Sigmoid colon (tissue), 7 donors: ENCODE measurements at regions of chr2 and their contacts with region 1.

Region 1: GRCh38 chr2:37982147-37982582 is 57.1 kb downstream of the RMDN2 start:
- DNase-seq: peak; percentile 78
- H3K4me3 ChIP-seq: peak overlapping the region in 3 of 4 donors; percentile 20 to 23 (median 22)
- H3K27ac ChIP-seq: no peak overlapping the region
- H3K4me1 ChIP-seq: peaks cover 0 to 5% (median 2%) of the 10 kb centered on the region in 4 donors
- H3K27me3 ChIP-seq: no peaks in the 10 kb centered on the region
- CTCF ChIP-seq: peak; percentile 59 to 88 (median 80)
- EP300 ChIP-seq: no peak
- POLR2A ChIP-seq: no peak

Region 2: DNA sequence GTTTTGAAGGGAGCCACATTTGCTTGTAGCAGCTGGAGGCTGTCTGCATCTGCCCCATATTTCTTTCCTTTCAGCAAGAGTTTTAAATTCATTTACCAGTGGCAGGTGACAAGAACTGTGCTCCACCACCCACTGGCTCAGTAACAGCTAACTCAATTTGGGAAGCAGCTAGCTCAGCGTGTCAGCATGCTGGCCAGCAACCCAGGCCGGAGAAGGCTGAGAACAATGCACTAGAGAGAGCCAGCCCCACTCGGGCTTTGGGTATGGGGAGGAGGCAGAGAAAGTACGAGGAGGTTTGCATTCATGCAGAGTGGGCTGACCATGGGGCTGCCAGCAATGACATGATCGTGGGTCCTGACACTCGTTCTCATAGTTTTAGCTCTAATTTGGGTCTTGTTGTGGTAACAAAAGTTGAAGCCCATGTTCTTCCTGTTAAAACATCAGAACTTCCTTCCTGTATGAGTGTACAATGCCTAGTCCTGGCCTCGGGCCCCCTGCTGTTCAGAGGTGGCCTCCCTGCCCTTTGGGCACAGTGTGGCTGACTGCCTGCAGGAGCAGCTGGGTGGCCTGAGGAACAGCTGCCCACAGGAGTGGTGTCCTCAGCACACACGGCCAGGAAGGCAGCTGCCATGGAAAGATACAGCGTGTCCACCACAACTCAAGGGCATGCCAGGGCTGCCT is 333.7 kb before region 1 on chr2:
- intact Hi-C with region 1: no loop called
- DNase-seq: peak; percentile 82
- H3K4me3 ChIP-seq: no peak overlapping the region
- H3K27ac ChIP-seq: peak overlapping the region; percentile 64 to 99 (median 84)
- H3K4me1 ChIP-seq: peaks cover 0 to 89% (median 80%) of the 10 kb centered on the region in 4 donors
- H3K27me3 ChIP-seq: no peaks in the 10 kb centered on the region
- CTCF ChIP-seq: peak in 1 of 4 experiments; percentile 13
- EP300 ChIP-seq: no peak
- POLR2A ChIP-seq: no peak

Region 3: GRCh38 chr2:38076606-38077430 is 94.7 kb after region 1 on chr2:
- intact Hi-C with region 1: loop called (anchors 5 kb)
- DNase-seq: peak; percentile 88
- H3K4me3 ChIP-seq: peak overlapping the region; percentile 32 to 64 (median 60)
- H3K27ac ChIP-seq: peak overlapping the region; percentile 72 to 84 (median 78)
- H3K4me1 ChIP-seq: peaks cover 0 to 41% (median 34%) of the 10 kb centered on the region in 4 donors
- H3K27me3 ChIP-seq: peaks cover 0 to 37% (median 18%) of the 10 kb centered on the region in 3 donors
- CTCF ChIP-seq: peak in 2 of 4 experiments; percentile 29 to 54
- EP300 ChIP-seq: no peak
- POLR2A ChIP-seq: no peak